ENCODE measurements at regions of chr13 and their contacts with region 1.

Region 1: GRCh38 chr13:79385694-79386093 is 20.4 kb downstream of the RBM26 start:
- DNase-seq: peak; percentile 40
- H3K4me3 Mint-ChIP-seq: no peak overlapping the region
- H3K27ac Mint-ChIP-seq: no peak overlapping the region
- H3K4me1 Mint-ChIP-seq: peaks cover 71% of the 10 kb centered on the region
- H3K27me3 Mint-ChIP-seq: no peaks in the 10 kb centered on the region

Region 2: DNA sequence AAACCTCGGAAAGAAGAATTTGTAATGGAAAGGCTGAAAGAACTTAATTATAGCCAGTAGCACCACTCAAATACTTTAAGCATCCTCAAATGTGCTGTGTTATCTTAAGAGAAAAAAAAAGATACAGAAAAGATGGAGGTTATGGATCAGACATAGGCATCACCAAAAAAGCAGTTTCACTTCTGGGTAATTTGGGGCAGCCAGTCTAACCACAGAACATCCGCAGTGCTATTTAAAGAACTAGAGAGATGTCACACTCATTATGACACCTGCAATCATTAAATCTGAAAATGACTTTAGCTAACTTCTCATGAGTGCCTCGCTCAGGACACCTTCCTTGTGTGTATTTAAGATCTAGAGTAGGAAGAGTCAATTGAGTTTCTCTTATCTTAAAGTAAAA is 191.4 kb before region 1 on chr13:
- CTCF ChIA-PET with region 1: no interaction called
- intact Hi-C with region 1: loop called (anchors 1 kb)
- DNase-seq: peak; percentile 76
- H3K4me3 Mint-ChIP-seq: no peak overlapping the region
- H3K27ac Mint-ChIP-seq: no peak overlapping the region
- H3K4me1 Mint-ChIP-seq: peaks cover 40% of the 10 kb centered on the region
- H3K27me3 Mint-ChIP-seq: no peaks in the 10 kb centered on the region

Region 3: DNA sequence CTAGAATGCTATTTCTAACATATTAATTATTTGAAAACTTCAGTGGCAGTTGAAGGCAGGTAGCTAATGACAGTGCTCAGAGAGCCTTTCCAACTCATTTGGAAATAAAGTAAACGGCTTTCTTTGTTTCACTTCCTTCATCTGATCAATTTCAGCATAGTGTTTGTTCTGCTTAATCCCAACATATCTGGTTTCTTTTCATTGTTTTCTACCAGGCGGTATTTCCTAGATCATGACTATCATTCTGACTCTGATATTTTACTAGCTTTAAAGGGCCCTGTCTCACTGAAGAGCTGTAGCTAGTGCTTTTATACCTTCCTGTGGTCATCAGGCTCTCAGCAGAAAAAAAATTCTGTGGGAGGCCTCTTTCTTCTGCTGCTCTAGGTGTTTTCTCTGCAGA is 158.3 kb before region 1 on chr13:
- CTCF ChIA-PET with region 1: no interaction called
- intact Hi-C with region 1: no loop called
- DNase-seq: no peak
- H3K4me3 Mint-ChIP-seq: no peak overlapping the region
- H3K27ac Mint-ChIP-seq: no peak overlapping the region
- H3K4me1 Mint-ChIP-seq: no peaks in the 10 kb centered on the region
- H3K27me3 Mint-ChIP-seq: peaks cover 17% of the 10 kb centered on the region

Region 4: DNA sequence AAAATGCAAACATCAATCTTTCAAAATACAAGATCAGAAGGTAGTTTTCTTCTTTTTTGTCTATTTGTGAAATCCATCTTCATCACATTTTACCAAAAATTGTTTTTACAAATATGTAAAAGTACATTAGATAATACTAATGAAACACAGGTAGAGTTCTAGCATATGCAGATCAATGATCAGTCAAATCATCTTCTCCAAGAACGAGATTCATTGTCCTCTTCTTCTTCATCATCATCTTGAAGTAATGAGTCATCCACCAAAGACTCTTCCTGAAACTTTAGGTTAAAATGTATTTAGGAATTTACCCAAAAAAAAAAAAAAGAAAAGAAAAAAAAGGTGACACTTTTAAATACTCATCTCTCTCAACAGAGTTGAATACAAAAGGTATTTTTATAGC is 65.3 kb before region 1 on chr13:
- CTCF ChIA-PET with region 1: interaction called, 3 read pairs
- intact Hi-C with region 1: loop called (anchors 2 kb)
- DNase-seq: no peak
- H3K4me3 Mint-ChIP-seq: no peak overlapping the region
- H3K27ac Mint-ChIP-seq: no peak overlapping the region
- H3K4me1 Mint-ChIP-seq: peaks cover 15% of the 10 kb centered on the region
- H3K27me3 Mint-ChIP-seq: no peaks in the 10 kb centered on the region

Region 5: GRCh38 chr13:79360095-79360494 is 25.6 kb before region 1 on chr13:
- CTCF ChIA-PET with region 1: interaction called, 3 read pairs
- intact Hi-C with region 1: loop called (anchors 1 kb)
- DNase-seq: no peak
- H3K4me3 Mint-ChIP-seq: no peak overlapping the region
- H3K27ac Mint-ChIP-seq: no peak overlapping the region
- H3K4me1 Mint-ChIP-seq: peaks cover 44% of the 10 kb centered on the region
- H3K27me3 Mint-ChIP-seq: no peaks in the 10 kb centered on the region

Region 6: GRCh38 chr13:79501538-79502232 is 116.0 kb after region 1 on chr13:
- CTCF ChIA-PET with region 1: no interaction called
- intact Hi-C with region 1: no loop called
- DNase-seq: no peak
- H3K4me3 Mint-ChIP-seq: peak overlapping the region; percentile 17
- H3K27ac Mint-ChIP-seq: peak overlapping the region; percentile 81
- H3K4me1 Mint-ChIP-seq: peaks cover 83% of the 10 kb centered on the region
- H3K27me3 Mint-ChIP-seq: no peaks in the 10 kb centered on the region

Region 7: DNA sequence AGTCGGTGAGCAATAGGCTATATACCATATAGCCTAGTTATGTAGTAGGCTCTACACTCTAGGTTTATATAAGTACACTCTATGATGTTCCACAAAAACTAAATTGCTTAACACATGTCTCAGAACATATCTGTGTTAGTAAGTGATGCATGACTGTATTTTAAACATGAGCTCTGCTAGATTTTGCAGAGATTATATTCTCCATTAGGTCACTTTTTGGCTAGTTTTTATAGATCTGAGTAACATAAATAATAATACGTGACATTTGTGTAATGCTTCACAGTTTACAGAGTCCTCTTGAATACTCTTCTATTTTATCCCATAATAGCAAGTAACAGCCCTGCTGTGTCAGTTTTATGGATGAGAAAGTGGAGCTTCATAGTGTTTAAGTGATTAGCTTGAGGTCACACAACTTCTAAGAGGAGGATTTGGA is 143.1 kb after region 1 on chr13:
- CTCF ChIA-PET with region 1: no interaction called
- intact Hi-C with region 1: no loop called
- DNase-seq: no peak
- H3K4me3 Mint-ChIP-seq: no peak overlapping the region
- H3K27ac Mint-ChIP-seq: no peak overlapping the region
- H3K4me1 Mint-ChIP-seq: peaks cover 20% of the 10 kb centered on the region
- H3K27me3 Mint-ChIP-seq: no peaks in the 10 kb centered on the region